ENCODE measurements at regions of chr5 and their contacts with region 1.

Region 1: DNA sequence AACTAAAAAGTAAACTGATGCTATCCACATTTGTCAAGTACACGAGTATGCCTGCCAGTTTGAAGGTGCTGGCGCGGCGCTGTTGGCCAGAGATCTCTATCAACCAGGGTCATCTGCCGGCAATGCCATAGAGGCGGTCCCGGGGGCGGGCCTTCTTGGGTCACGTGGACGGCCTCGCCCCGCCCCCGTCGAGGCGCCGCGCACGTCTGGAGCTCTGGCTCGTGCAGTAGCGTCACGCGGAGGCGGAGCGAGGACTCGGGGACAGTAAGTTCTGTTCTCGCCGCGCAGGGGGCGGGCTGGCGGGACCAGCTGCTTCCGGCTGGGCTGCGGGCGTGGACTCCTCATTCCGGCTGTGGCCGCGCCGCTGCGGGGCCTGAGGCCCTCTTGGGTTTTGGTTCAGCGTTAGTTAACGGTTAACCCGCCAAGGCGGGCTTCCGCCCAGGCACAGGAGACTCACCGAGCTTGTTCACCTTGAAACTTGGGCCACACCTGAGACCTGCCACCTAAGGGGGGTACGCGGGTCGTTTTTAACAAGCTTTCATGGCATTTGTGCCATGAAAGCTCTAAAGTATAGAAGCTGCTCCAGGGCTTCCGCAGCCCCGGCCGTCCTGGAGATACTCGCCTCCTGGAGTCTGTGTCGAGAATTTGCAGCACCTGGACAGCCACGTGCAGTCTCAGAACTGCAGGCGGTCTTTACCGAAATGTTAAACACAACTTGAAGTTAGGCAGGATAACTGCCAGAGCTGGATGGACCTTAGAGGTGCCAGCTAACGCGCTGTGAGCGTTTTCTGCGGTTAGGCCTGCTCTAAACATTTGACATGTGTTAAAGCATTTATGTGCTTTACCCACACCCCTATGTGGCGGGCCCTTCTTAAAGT is at the start of gene RFESD:
- DNase-seq: peak; percentile 97 to 100 (median 99)
- H3K4me3 ChIP-seq: peak within 1 kb of the TSS; percentile 60
- H3K27ac ChIP-seq: peak within 1 kb of the TSS; percentile 86 to 92
- H3K4me1 ChIP-seq: no peaks in the 10 kb centered on the region
- H3K27me3 ChIP-seq: no peaks in the 10 kb centered on the region
- CTCF ChIP-seq: peak in 2 of 3 donors; percentile 28 to 37
- EP300 ChIP-seq: peak; percentile 98
- POLR2A ChIP-seq: peak; percentile 93
- total RNA-seq, gene RFESD: 1.1 to 5.0 (median 3.2) TPM

Region 2: DNA sequence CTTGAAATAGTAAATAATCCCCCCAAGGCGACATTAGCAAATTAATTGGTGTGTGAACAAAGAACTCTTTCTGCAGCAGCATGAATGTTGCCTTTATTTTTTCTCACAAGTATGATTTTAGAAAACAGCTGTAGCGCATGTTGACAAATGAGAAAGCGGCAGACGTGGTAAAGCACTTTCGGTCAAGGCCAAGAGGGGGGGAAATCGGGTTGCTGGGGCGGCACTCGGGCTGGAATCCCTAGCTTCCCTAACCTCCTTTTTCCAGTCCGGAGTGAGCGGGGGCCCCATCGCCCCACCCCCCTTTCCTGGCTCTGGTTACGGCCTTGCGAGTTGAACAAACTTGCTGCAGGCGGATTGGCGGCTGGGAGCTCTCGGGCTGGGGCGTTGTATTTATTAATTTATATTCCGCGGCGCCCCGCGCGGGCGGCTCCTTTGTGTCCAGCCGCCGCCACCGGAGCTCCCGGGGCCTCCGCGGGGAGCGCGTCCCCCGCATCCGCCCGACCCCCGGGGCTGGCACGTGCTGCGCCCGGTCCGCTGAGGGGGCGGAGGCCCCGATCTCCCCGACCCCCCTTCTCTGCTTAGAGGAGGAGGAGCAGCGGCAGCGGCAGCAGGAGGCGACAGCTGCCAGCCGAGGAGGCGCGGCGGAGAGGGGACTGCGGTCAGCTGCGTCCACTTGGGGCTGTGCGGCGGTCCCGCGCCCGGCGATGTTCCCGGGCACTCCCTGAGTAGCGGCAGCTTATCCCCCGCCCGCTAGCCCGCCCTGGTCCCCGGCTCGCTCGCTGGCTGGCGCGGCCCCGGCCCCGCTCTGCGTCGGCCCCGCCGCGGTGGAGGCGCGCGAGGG is 84.2 kb after region 1 on chr5 and contains the start of gene RHOBTB3:
- intact Hi-C with region 1: loop called in 2 of 4 experiments (anchors 5 to 10 kb)
- DNase-seq: peak; percentile 97 to 98 (median 98)
- H3K4me3 ChIP-seq: peak within 1 kb of the TSS; percentile 87
- H3K27ac ChIP-seq: peak within 1 kb of the TSS; percentile 99
- H3K4me1 ChIP-seq: peaks cover 14% of the 10 kb centered on the region
- H3K27me3 ChIP-seq: no peaks in the 10 kb centered on the region
- CTCF ChIP-seq: no peak
- EP300 ChIP-seq: no peak
- POLR2A ChIP-seq: peak; percentile 84
- total RNA-seq, gene RHOBTB3: 106 to 221 (median 200) TPM

Region 3: GRCh38 chr5:95781101-95781583 is 134.3 kb after region 1 on chr5:
- intact Hi-C with region 1: loop called in 1 of 4 experiments (anchors 5 kb)
- DNase-seq: peak; percentile 72 to 83 (median 78)
- H3K4me3 ChIP-seq: no peak overlapping the region
- H3K27ac ChIP-seq: peak overlapping the region in 1 of 2 donors; percentile 1
- H3K4me1 ChIP-seq: peaks cover 16% of the 10 kb centered on the region
- H3K27me3 ChIP-seq: no peaks in the 10 kb centered on the region
- CTCF ChIP-seq: peak; percentile 65 to 83 (median 78)
- EP300 ChIP-seq: no peak
- POLR2A ChIP-seq: no peak

Region 4: GRCh38 chr5:95846554-95847260 is 199.9 kb after region 1 on chr5:
- intact Hi-C with region 1: loop called in 2 of 4 experiments (anchors 5 kb)
- DNase-seq: peak; percentile 59 to 81 (median 70)
- H3K4me3 ChIP-seq: no peak overlapping the region
- H3K27ac ChIP-seq: no peak overlapping the region
- H3K4me1 ChIP-seq: no peaks in the 10 kb centered on the region
- H3K27me3 ChIP-seq: no peaks in the 10 kb centered on the region
- CTCF ChIP-seq: peak; percentile 72 to 93 (median 93)
- EP300 ChIP-seq: no peak
- POLR2A ChIP-seq: no peak

Region 5: GRCh38 chr5:96336351-96336985 is 689.7 kb after region 1 on chr5:
- intact Hi-C with region 1: loop called in 2 of 4 experiments (anchors 10 kb)
- DNase-seq: peak in 4 of 5 donors; percentile 38 to 76 (median 40)
- H3K4me3 ChIP-seq: no peak overlapping the region
- H3K27ac ChIP-seq: no peak overlapping the region
- H3K4me1 ChIP-seq: peaks cover 6% of the 10 kb centered on the region
- H3K27me3 ChIP-seq: no peaks in the 10 kb centered on the region
- CTCF ChIP-seq: peak; percentile 36 to 61 (median 54)
- EP300 ChIP-seq: no peak
- POLR2A ChIP-seq: no peak

Region 6: GRCh38 chr5:97162045-97162444 is 1515.3 kb after region 1 on chr5:
- intact Hi-C with region 1: loop called in 1 of 4 experiments (anchors 10 kb)
- DNase-seq: peak in 4 of 5 donors; percentile 31 to 73 (median 44)
- H3K4me3 ChIP-seq: no peak overlapping the region
- H3K27ac ChIP-seq: no peak overlapping the region
- H3K4me1 ChIP-seq: no peaks in the 10 kb centered on the region
- H3K27me3 ChIP-seq: no peaks in the 10 kb centered on the region
- CTCF ChIP-seq: peak; percentile 68 to 78 (median 71)
- EP300 ChIP-seq: no peak
- POLR2A ChIP-seq: no peak